ENCODE measurements at regions of chr16 and their contacts with region 1.

Region 1: DNA sequence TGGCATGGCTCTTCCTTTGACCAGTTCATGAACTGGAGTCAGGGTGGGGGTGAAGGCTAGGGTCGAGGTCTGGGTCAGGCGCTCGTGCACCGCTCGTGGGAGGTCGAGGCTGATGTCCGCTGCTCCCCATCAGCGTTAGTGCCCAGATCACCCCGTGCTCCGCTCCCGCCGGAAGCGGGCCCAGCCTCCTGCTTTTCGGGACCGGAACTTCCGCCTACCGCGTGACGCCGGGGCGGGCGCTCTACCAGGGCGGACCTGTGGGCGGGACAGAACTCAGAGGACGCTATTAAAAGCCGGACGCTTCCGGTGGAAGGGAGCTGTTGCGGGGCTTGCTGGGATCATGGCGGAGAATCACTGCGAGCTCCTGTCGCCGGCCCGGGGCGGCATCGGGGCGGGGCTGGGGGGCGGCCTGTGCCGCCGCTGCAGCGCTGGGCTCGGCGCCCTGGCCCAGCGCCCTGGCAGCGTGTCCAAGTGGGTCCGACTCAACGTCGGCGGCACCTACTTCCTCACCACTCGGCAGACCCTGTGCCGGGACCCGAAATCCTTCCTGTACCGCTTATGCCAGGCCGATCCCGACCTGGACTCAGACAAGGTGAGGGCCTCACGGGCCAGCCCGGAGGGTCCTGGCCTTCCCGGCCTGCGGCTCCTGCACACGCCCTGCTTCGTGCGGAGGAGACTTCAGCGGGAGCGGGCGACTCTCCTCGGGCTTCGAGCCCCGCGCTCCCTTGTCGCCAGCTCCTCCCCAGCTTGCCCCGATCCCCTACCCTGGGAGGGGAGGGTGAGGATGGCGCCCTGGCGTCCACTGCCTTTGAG is at the start of gene KCTD5:
- DNase-seq: peak; percentile 94
- H3K4me3 ChIP-seq: peak within 1 kb of the TSS; percentile 65 to 91 (median 75)
- H3K27ac ChIP-seq: peak within 1 kb of the TSS; percentile 68
- H3K4me1 ChIP-seq: peaks cover 6% of the 10 kb centered on the region
- H3K27me3 ChIP-seq: no peaks in the 10 kb centered on the region
- CTCF ChIP-seq: no peak
- POLR2A ChIP-seq: peak; percentile 99
- total RNA-seq, gene KCTD5: 30.8 and 32.2 TPM in 2 replicates

Region 2: DNA sequence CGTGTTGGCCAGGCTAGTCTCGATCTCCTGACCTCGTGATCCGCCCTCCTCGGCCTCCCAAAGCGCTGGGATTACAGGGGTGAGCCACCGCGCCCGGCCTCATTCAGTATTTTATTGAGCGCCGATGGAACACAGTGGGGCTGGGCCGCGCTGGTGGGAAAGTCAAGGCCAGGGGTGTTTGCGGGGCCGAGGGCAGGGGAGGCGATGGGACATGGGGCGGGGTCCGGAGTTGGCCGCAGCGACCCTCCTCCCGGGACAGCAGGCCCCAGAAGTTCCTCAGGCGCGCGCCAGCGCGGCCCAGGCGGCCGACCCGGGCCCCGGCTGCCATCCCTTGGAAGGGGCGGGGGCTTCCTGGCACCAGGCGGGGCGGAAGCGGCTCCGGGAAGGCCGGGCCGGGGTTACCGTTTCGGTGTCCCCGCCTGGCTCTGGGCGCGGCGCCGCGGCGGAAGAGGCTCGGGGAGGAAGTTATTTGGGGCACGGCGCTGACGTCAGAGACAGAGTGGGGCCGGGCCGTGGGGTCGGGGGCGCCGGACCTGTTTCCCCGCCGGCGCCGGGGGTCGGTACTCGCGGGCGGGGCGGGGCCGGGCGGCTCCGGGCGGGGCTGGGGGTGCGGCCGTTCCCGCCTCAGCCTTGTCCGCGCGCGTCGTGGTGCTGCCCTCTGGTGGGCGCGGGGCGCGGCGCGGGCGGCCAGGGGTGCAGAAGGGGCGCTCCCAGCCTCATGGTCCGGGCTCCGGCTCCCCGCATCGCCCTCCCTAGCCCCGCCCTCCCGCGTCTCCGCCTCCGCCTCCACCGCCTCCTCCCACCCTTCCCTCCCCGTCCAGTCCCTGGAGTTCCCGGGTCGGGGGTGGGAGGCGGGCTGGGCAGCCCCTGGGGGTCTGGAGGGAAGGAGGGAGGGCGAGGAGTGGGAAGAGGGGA is 38.6 kb after region 1 on chr16:
- CTCF ChIA-PET with region 1: no interaction called
- POLR2A ChIA-PET with region 1: no interaction called
- dilution Hi-C with region 1: no loop called
- intact Hi-C with region 1: loop called (anchors 1 kb)
- DNase-seq: peak; percentile 64
- H3K4me3 ChIP-seq: peak overlapping the region; percentile 38 to 62 (median 55)
- H3K27ac ChIP-seq: peak overlapping the region; percentile 41
- H3K4me1 ChIP-seq: peaks cover 4% of the 10 kb centered on the region
- H3K27me3 ChIP-seq: peaks cover 0 to 4% of the 10 kb centered on the region in 2 experiments
- CTCF ChIP-seq: peak; percentile 29 to 61
- POLR2A ChIP-seq: peak; percentile 53

Region 3: DNA sequence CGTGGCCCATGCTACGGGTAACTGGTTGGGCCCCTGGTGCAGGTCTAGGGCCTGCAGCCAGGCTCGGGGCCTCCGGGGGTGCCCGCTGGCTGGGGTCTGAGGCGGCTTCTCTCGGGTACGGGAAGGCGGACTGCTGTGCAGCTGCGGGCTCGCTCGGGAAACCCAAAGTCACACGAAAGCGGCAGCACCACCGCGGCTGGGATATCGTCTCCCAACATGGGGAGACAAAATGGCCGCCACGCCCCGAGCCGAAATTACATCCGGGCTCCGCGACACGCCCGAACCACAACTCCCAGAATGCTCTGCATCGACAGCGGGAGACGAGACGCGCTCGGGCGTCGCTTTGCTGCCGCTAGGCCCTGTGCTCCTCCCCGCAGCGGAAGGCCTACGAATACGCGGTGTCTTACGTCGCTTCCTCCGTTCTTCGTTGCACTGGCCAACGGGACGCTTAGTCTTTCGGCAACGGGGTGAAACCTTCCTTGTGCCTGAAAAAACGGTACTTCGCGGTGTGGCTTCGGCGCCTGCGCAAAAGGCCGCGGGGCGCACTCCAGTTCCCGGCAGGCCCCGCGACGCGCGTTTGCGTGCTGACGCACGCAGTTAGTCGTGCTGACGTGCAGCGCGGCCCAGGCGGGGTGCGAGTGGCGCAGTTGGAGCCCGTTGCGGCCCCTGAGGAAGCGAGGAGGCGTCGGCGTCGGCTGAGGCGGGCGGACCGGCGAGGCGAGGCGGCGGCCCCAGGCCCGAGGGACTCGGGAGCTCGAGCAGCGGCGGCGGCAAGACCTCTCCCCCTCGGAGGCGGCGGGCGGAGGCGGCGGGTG is 69.8 kb after region 1 on chr16 and contains the start of gene SRRM2:
- CTCF ChIA-PET with region 1: no interaction called
- POLR2A ChIA-PET with region 1: interaction called, 3 read pairs
- dilution Hi-C with region 1: no loop called
- intact Hi-C with region 1: loop called (anchors 1 kb)
- DNase-seq: peak; percentile 98
- H3K4me3 ChIP-seq: peak within 1 kb of the TSS; percentile 91 to 96 (median 93)
- H3K27ac ChIP-seq: peak within 1 kb of the TSS; percentile 65
- H3K4me1 ChIP-seq: peaks cover 26% of the 10 kb centered on the region
- H3K27me3 ChIP-seq: no peaks in the 10 kb centered on the region
- CTCF ChIP-seq: no peak
- POLR2A ChIP-seq: peak; percentile 81
- total RNA-seq, gene SRRM2: 483 and 492 TPM in 2 replicates